A549 (cell line): ENCODE measurements at regions of chr15 and their contacts with region 1.

Region 1: GRCh38 chr15:37891766-37892368 is 42.6 kb upstream of the TMCO5A start:
- DNase-seq: peak; percentile 5 to 33
- ATAC-seq: peak; percentile 71 to 84; a peak in 5 of 6 replicates
- H3K4me3 ChIP-seq: no peak overlapping the region
- H3K27ac ChIP-seq: no peak overlapping the region
- H3K4me1 ChIP-seq: no peaks in the 10 kb centered on the region
- CTCF ChIP-seq: peak; percentile 56
- EP300 ChIP-seq: no peak
- POLR2A ChIP-seq: no peak
- RAD21 ChIP-seq: peak; percentile 56 to 70

Region 2: GRCh38 chr15:37880009-37880834 is 11.6 kb before region 1 on chr15:
- CTCF ChIA-PET with region 1: interaction called, 21 read pairs
- POLR2A ChIA-PET with region 1: no interaction called
- DNase-seq: peak; percentile 0 to 22
- ATAC-seq: peak in 1 of 2 experiments; percentile 63; a peak in 3 of 6 replicates
- H3K4me3 ChIP-seq: no peak overlapping the region
- H3K27ac ChIP-seq: no peak overlapping the region
- H3K4me1 ChIP-seq: no peaks in the 10 kb centered on the region
- CTCF ChIP-seq: peak; percentile 56
- EP300 ChIP-seq: no peak
- POLR2A ChIP-seq: no peak
- RAD21 ChIP-seq: peak; percentile 70 to 71